ENCODE measurements at regions of chr2 and their contacts with region 1.

Region 1: DNA sequence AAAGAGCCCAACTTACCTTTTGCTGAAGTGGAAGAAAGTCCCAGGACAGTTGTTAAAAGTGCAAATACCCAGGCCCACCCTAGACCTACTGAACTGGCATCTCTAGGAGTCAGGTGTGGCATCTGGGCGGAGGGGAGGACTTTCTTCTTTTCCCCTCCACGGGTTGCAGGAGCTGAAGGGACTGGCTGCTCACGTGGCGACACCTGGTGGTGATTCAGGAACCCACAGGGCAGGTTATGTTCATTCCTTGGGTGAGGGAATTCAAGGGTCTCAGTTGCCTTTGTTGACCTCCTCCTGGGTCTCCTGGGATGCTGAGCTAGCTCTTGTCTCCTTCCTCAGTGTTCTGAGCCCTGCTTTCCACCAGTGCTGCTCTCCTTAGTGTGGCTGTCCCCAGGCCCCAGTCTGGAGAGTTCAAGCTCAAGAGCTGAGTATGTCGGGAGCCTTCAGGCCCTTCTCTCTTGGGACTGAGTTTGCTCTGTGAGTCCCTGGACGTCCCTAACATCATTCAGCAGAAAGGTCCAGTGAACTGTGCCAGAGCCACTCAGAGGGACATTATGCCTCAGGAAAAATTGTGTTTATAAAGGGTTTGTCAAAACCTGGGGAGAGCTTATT is 56.9 kb downstream of the DYSF start:
- DNase-seq: peak; percentile 33
- ATAC-seq: peak; percentile 95
- H3K4me3 ChIP-seq: no peak overlapping the region
- H3K27ac ChIP-seq: no peak overlapping the region
- H3K4me1 ChIP-seq: no peaks in the 10 kb centered on the region
- H3K27me3 ChIP-seq: no peaks in the 10 kb centered on the region
- CTCF ChIP-seq: peak; percentile 92 to 96 (median 96)
- POLR2A ChIP-seq: no peak
- RAD21 ChIP-seq: peak; percentile 99

Region 2: DNA sequence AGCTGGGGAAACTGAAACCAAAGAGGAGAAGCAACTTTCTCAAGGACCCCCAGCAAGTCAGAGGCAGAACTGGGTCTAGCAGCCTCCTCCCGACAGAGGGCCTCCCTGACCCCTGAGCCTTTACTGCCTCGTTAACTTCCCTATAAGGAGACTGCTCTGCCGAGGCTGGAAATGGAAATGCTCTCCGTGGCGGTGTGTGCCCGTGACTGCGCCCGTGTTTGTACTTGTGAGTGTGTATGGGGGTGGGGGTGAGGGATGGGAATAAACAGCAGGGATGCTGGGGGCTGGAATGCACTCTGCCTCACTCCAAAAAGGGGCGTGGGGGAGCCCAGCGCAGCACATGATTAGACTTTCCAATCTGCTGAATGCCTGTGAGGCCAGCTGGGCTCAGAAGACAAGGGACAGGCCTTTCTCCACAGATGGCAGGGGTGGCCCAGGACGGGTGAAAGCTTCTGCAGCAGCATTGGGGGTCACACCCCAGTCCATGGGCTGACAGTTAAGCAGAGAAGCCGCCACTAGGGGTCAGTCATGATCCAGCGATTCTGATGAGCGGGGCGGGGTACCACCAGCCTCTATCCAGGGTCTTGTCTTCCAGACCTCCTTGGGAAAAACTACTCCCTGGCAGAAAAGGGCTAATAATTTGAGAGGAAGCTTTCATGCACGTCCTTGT is 353.0 kb before region 1 on chr2:
- CTCF ChIA-PET with region 1: no interaction called
- POLR2A ChIA-PET with region 1: no interaction called
- RAD21 ChIA-PET with region 1: no interaction called
- intact Hi-C with region 1: loop called (anchors 1 kb)
- DNase-seq: peak; percentile 19
- ATAC-seq: peak; percentile 91
- H3K4me3 ChIP-seq: no peak overlapping the region
- H3K27ac ChIP-seq: no peak overlapping the region
- H3K4me1 ChIP-seq: no peaks in the 10 kb centered on the region
- H3K27me3 ChIP-seq: no peaks in the 10 kb centered on the region
- CTCF ChIP-seq: peak; percentile 52 to 79 (median 78); a peak in 5 of 6 replicates
- POLR2A ChIP-seq: no peak
- RAD21 ChIP-seq: peak; percentile 80

Region 3: GRCh38 chr2:71226965-71227560 is 283.2 kb before region 1 on chr2 and contains the start of gene PAIP2B:
- CTCF ChIA-PET with region 1: interaction called, 12 read pairs
- POLR2A ChIA-PET with region 1: interaction called, 4 read pairs
- RAD21 ChIA-PET with region 1: no interaction called
- intact Hi-C with region 1: loop called (anchors 1 kb)
- DNase-seq: peak; percentile 99
- ATAC-seq: peak; percentile 92
- H3K4me3 ChIP-seq: peak within 1 kb of the TSS; percentile 67 to 71
- H3K27ac ChIP-seq: peak within 1 kb of the TSS; percentile 39; the same call in 1 of the 2 replicates
- H3K4me1 ChIP-seq: peaks cover 3 to 20% of the 10 kb centered on the region in 2 experiments; a peak in 3 of 4 replicates
- H3K27me3 ChIP-seq: no peaks in the 10 kb centered on the region
- CTCF ChIP-seq: no peak
- POLR2A ChIP-seq: peak; percentile 42
- RAD21 ChIP-seq: no peak
- total RNA-seq, gene PAIP2B: 5.9 TPM

Region 4: GRCh38 chr2:71299507-71299906 is 210.8 kb before region 1 on chr2:
- CTCF ChIA-PET with region 1: interaction called, 147 read pairs
- POLR2A ChIA-PET with region 1: interaction called, 8 read pairs
- RAD21 ChIA-PET with region 1: interaction called, 6 to 12 read pairs
- intact Hi-C with region 1: loop called (anchors 1 kb)
- DNase-seq: no peak
- ATAC-seq: no peak; the same call in 1 of the 2 replicates
- H3K4me3 ChIP-seq: no peak overlapping the region
- H3K27ac ChIP-seq: no peak overlapping the region
- H3K4me1 ChIP-seq: no peaks in the 10 kb centered on the region
- H3K27me3 ChIP-seq: no peaks in the 10 kb centered on the region
- CTCF ChIP-seq: peak; percentile 58 to 77 (median 64); a peak in 5 of 6 replicates
- POLR2A ChIP-seq: no peak
- RAD21 ChIP-seq: peak; percentile 75

Region 5: GRCh38 chr2:71460595-71461303 is 49.6 kb before region 1 on chr2:
- CTCF ChIA-PET with region 1: interaction called, 61 read pairs
- POLR2A ChIA-PET with region 1: interaction called, 3 read pairs
- RAD21 ChIA-PET with region 1: interaction called, 15 to 23 read pairs
- intact Hi-C with region 1: loop called (anchors 1 kb)
- DNase-seq: peak; percentile 32
- ATAC-seq: peak; percentile 78
- H3K4me3 ChIP-seq: no peak overlapping the region
- H3K27ac ChIP-seq: no peak overlapping the region
- H3K4me1 ChIP-seq: peaks cover 0 to 12% of the 10 kb centered on the region in 2 experiments; a peak in 1 of 4 replicates
- H3K27me3 ChIP-seq: no peaks in the 10 kb centered on the region
- CTCF ChIP-seq: peak; percentile 62 to 79 (median 78)
- POLR2A ChIP-seq: no peak
- RAD21 ChIP-seq: peak; percentile 79

Region 6: DNA sequence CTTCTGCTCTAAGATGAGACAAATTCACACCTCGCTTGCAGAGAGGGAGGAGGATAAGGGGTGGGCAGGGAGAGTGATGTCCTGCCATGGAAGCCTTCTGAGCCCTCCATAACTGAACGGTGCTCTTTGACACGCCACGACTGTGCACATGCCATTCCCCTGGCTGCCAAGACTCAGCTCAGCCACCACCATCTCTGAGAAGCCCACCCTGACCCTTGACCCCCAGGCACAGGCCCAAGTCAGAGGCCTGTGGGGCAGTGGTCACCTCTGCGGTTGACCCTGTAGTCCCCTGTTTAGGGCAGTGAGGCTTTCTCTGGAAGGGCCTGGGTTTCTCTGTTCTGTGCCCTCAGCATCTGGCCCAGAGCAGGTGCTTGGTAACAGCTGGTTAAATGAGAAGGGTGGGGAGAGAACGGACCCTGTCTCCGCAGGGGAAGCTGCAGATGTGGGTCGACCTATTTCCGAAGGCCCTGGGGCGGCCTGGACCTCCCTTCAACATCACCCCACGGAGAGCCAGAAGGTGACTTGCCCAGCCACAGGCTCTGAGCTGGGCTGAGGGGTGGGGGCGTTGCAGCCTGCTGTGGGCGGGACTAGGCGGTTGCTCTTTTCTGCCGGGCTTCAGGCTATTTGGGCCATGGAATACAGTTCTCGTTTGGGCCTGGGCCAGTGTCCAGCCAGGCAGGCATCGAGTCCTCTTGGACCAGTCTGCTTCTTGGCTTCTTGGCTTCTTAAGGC is 158.2 kb after region 1 on chr2:
- CTCF ChIA-PET with region 1: no interaction called
- POLR2A ChIA-PET with region 1: no interaction called
- RAD21 ChIA-PET with region 1: no interaction called
- intact Hi-C with region 1: no loop called
- DNase-seq: no peak
- ATAC-seq: no peak
- H3K4me3 ChIP-seq: no peak overlapping the region
- H3K27ac ChIP-seq: no peak overlapping the region
- H3K4me1 ChIP-seq: no peaks in the 10 kb centered on the region
- H3K27me3 ChIP-seq: no peaks in the 10 kb centered on the region
- CTCF ChIP-seq: no peak
- POLR2A ChIP-seq: no peak
- RAD21 ChIP-seq: no peak

Measured in HCT116 (cell line).